Right ventricle myocardium superior (tissue), 1 donor: ENCODE measurements at regions of chr2 and their contacts with region 1.

Region 1: GRCh38 chr2:226799181-226799975 is at the start of gene IRS1:
- DNase-seq: peak; percentile 80
- ATAC-seq: peak; percentile 55
- total RNA-seq, gene IRS1: 17.6 TPM

Region 2: GRCh38 chr2:225660262-225661131 is 1138.9 kb before region 1 on chr2:
- intact Hi-C with region 1: loop called (anchors 10 kb)
- DNase-seq: peak; percentile 84
- ATAC-seq: peak; percentile 86

Region 3: DNA sequence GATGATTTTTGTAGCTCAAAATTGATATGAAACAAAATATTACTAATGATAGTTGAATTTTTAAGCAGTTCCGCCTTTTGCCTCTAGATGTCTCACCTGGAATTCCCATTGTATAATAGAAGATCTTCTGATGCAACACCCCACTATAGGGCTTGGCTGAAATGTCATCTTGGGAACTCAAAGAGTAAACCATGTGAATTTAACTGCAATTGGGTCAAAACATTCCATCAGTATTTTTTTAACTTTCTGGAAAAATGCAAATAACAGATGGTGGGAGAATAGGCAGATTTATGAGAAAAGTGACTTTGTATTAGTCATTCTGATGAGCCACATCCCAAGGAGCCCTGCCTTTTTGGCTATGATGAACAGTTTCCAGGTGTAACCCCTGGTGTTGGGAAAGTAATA is 909.9 kb before region 1 on chr2:
- intact Hi-C with region 1: loop called (anchors 2 kb)
- DNase-seq: no peak
- ATAC-seq: peak; percentile 60

Region 4: DNA sequence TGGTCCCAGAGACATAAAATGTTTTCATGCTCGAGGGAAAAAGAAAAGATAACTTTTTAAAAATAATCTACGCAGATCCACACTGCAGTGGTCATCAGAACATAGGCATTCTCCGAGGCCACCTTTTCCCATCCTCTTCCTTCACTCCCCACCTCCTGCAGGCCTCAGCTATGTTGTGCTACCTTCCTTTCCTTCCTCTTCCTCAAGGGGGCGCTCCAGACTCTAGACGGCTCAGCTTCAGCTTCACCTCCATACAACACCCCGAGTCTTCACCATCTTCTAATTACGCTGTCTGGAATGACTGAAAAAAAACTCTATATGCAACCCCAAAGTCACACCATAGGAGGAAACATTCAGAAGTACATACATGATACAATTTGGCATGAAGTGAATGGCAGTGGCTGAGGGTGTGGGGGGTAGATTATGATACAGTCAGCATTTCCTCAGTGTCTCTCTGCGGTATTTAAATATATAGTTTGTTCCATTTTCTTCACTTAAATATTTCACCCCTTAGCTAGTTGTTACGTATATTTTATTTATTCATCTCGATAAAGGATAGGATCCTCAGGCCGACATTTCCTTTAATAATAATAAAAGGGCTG is 583.4 kb before region 1 on chr2:
- intact Hi-C with region 1: loop called (anchors 5 kb)
- DNase-seq: peak; percentile 41
- ATAC-seq: peak; percentile 81

Region 5: GRCh38 chr2:226984750-226985582 is 185.6 kb after region 1 on chr2:
- intact Hi-C with region 1: loop called (anchors 5 kb)
- DNase-seq: no peak
- ATAC-seq: peak; percentile 74

Region 6: GRCh38 chr2:227388537-227389011 is 589.2 kb after region 1 on chr2:
- intact Hi-C with region 1: no loop called
- DNase-seq: no peak
- ATAC-seq: no peak